B cell (primary cell): ENCODE measurements at regions of chr17 and their contacts with region 1.

Region 1: DNA sequence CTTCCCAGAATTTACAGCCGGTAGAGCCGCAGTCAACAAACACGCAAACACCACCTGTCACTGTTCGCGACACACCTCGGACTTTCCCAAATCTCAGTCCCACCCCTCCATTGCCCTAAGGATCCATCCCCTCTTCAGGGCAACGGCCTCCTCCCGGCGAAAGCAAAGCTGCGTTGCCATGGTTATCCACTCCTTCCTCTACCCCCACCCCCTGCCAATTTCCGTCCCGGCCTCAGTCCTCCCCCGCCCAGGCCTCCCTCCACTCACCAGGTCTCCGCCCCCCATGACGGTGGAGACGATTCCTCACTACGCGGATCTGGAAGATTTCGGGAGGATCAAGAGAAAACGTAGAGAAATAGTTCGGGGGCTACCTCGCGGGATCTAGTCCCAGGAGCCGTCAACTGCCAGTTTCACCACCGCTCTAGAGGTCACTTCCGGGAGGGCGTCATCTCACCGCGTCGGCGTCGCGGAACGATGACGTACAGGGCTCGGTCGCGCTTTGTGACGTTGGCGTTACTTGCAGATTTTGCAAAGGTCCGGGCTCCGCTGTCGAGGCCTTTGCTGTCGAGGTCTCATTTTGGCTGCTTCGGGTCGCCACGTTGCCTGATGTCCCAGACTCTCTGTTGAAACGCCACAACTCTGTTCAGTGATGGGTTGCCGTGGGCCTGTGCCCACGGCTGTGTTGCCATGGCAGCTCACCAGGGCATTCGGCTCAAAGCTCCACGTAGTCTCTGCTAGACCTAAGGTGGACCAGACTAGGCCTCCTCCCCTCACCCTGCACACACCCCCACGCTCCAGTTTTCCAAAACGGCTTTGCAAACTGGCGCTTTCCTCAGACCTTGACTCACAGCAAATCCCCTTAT is at the start of gene CWC25:
- DNase-seq: peak; percentile 100
- ATAC-seq: peak; percentile 83
- H3K4me3 ChIP-seq: peak within 1 kb of the TSS; percentile 77 to 93 (median 81)
- H3K4me3 Mint-ChIP-seq: peak within 1 kb of the TSS; percentile 98
- H3K27ac ChIP-seq: peak within 1 kb of the TSS; percentile 88 to 97
- H3K27ac Mint-ChIP-seq: peak within 1 kb of the TSS; percentile 100
- H3K4me1 ChIP-seq: peaks cover 14 to 19% of the 10 kb centered on the region in 2 donors
- H3K4me1 Mint-ChIP-seq: peaks cover 26% of the 10 kb centered on the region
- H3K27me3 ChIP-seq: no peaks in the 10 kb centered on the region
- H3K27me3 Mint-ChIP-seq: no peaks in the 10 kb centered on the region
- CTCF ChIP-seq: no peak
- total RNA-seq, gene CWC25: 39.3 and 43.3 TPM in 2 replicates

Region 2: GRCh38 chr17:38799378-38800236 is 25.5 kb before region 1 on chr17 and contains the start of gene PIP4K2B:
- CTCF ChIA-PET with region 1: no interaction called
- POLR2A ChIA-PET with region 1: interaction called, 3 read pairs
- intact Hi-C with region 1: loop called (anchors 1 kb)
- DNase-seq: peak; percentile 94
- ATAC-seq: peak; percentile 84
- H3K4me3 ChIP-seq: peak within 1 kb of the TSS; percentile 64 to 88 (median 75)
- H3K4me3 Mint-ChIP-seq: peak within 1 kb of the TSS; percentile 99
- H3K27ac ChIP-seq: peak within 1 kb of the TSS; percentile 72 to 79
- H3K27ac Mint-ChIP-seq: peak within 1 kb of the TSS; percentile 96
- H3K4me1 ChIP-seq: peaks cover 17 to 25% of the 10 kb centered on the region in 2 donors
- H3K4me1 Mint-ChIP-seq: peaks cover 34% of the 10 kb centered on the region
- H3K27me3 ChIP-seq: no peaks in the 10 kb centered on the region
- H3K27me3 Mint-ChIP-seq: no peaks in the 10 kb centered on the region
- CTCF ChIP-seq: no peak
- total RNA-seq, gene PIP4K2B: 42.9 and 46.8 TPM in 2 replicates

Region 3: DNA sequence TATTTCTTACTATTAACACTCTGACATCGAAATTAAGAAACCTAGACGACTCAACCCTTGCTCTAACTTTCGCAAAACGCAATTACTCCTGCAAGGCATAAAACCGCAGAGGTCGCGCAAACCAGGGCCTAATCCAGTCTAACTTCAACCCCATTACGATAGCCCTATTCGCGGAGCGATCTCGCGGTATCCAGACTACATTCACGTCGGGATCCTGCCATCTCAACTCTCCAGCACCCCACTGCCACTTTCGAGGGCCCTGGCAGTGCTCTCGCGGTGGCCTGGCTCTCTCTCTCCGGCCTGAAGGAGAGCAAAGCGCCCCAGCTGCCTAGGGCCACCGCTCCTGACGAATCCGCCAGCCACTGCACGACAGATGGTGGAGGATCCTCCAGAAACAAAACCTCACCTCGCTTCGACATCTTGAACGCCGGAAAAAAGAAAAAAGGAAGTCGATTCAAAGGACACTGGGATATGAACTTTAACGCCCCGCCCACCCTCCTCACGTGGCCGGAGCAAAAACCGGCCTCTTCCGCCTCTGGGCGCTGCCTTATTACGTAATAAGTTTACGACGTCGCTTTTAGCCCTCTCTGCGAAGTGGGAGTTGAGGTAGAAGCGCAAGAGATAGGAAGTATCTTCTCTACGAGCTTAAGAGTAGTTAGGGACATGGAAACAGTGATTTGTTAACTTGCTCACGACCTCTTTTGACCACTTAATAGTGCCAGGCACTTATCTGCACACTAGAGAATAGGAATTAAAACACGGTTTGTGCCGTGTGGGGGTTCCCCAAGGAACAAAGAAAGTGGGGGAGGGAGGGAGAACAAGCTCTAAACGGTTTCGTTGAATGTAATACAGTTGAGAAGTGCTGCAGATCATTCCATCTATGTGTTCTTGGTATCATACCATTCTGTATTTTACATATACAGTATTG is 28.4 kb after region 1 on chr17 and contains the start of gene RPL23:
- CTCF ChIA-PET with region 1: interaction called, 8 read pairs
- POLR2A ChIA-PET with region 1: interaction called, 11 read pairs
- intact Hi-C with region 1: loop called (anchors 1 kb)
- DNase-seq: peak; percentile 98
- ATAC-seq: peak; percentile 91
- H3K4me3 ChIP-seq: peak within 1 kb of the TSS; percentile 70 to 99 (median 73)
- H3K4me3 Mint-ChIP-seq: peak within 1 kb of the TSS; percentile 98
- H3K27ac ChIP-seq: peak within 1 kb of the TSS; percentile 92
- H3K27ac Mint-ChIP-seq: peak within 1 kb of the TSS; percentile 100
- H3K4me1 ChIP-seq: peaks cover 23 to 27% of the 10 kb centered on the region in 2 donors
- H3K4me1 Mint-ChIP-seq: peaks cover 41% of the 10 kb centered on the region
- H3K27me3 ChIP-seq: no peaks in the 10 kb centered on the region
- H3K27me3 Mint-ChIP-seq: no peaks in the 10 kb centered on the region
- CTCF ChIP-seq: no peak
- total RNA-seq, gene RPL23: 1,692 and 1,753 TPM in 2 replicates

Region 4: DNA sequence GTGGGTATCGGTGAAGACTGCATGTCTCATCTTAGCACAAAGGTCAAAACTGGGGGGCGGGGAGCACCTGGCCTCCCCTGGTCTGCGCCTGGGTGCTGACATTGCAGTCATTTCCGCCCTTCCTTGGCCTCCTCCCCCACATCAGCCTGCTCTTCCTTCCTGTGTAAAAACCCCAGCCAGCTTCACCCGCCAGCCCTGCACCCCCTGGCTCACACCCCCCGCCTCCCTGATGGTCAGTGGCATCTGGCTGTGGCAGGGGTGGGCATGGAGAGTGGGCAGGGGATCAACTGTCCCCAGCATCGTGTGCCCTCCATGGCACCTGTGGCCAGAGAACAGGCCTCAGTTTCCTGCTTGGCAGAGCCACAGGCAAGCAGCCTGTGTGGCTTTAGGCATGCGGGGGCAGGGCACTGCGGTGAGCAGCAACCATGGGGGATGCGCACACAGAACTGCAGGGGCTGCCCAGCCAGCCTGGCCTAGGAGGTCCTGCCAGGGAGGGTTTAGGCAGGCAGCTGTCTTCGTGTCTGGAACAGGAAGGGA is 73.8 kb after region 1 on chr17:
- CTCF ChIA-PET with region 1: no interaction called
- POLR2A ChIA-PET with region 1: interaction called, 5 read pairs
- intact Hi-C with region 1: loop called (anchors 1 kb)
- DNase-seq: peak; percentile 85
- ATAC-seq: peak; percentile 92
- H3K4me3 ChIP-seq: peak overlapping the region; percentile 23 to 55 (median 36)
- H3K4me3 Mint-ChIP-seq: peak overlapping the region; percentile 91
- H3K27ac ChIP-seq: peak overlapping the region; percentile 90 to 96
- H3K27ac Mint-ChIP-seq: peak overlapping the region; percentile 99
- H3K4me1 ChIP-seq: peaks cover 29 to 45% of the 10 kb centered on the region in 2 donors
- H3K4me1 Mint-ChIP-seq: peaks cover 30% of the 10 kb centered on the region
- H3K27me3 ChIP-seq: no peaks in the 10 kb centered on the region
- H3K27me3 Mint-ChIP-seq: no peaks in the 10 kb centered on the region
- CTCF ChIP-seq: no peak

Region 5: GRCh38 chr17:38914741-38915643 is 89.9 kb after region 1 on chr17:
- CTCF ChIA-PET with region 1: no interaction called
- POLR2A ChIA-PET with region 1: no interaction called
- intact Hi-C with region 1: no loop called
- DNase-seq: no peak
- ATAC-seq: no peak
- H3K4me3 ChIP-seq: no peak overlapping the region
- H3K4me3 Mint-ChIP-seq: no peak overlapping the region
- H3K27ac ChIP-seq: no peak overlapping the region
- H3K27ac Mint-ChIP-seq: no peak overlapping the region
- H3K4me1 ChIP-seq: no peaks in the 10 kb centered on the region
- H3K4me1 Mint-ChIP-seq: peaks cover 3% of the 10 kb centered on the region
- H3K27me3 ChIP-seq: no peaks in the 10 kb centered on the region
- H3K27me3 Mint-ChIP-seq: no peaks in the 10 kb centered on the region
- CTCF ChIP-seq: no peak

Region 6: DNA sequence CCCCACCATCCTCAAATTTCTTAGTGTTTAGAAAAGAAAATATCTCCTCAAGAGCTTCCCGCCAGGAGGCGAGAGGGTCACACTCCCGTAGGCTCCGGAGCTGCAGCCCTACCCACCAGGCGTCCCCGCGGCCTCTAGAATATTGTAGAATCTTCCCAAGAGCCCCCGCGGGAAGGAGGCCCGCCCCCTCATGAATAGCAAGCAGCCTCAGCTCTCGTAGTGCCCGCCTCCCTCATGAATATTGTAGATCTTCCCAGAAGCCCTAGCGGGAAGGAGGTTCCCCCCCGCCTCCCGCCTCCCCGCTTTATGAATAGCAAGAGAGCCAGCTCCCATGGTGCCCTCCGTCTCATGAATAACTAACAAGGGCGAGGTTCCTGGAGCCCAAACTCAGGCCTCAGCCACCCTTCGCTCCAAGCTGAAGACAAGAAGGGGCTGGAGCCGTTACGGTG is 142.2 kb after region 1 on chr17 and contains the start of gene FBXO47:
- CTCF ChIA-PET with region 1: no interaction called
- POLR2A ChIA-PET with region 1: interaction called, 3 read pairs
- intact Hi-C with region 1: loop called (anchors 1 kb)
- DNase-seq: peak; percentile 88
- ATAC-seq: peak; percentile 97
- H3K4me3 ChIP-seq: peak within 1 kb of the TSS in 4 of 5 experiments; percentile 30 to 50 (median 38)
- H3K4me3 Mint-ChIP-seq: peak within 1 kb of the TSS; percentile 82
- H3K27ac ChIP-seq: peak within 1 kb of the TSS in 1 of 2 donors; percentile 62
- H3K27ac Mint-ChIP-seq: peak within 1 kb of the TSS; percentile 88
- H3K4me1 ChIP-seq: peaks cover 0 to 13% of the 10 kb centered on the region in 2 donors
- H3K4me1 Mint-ChIP-seq: peaks cover 7% of the 10 kb centered on the region
- H3K27me3 ChIP-seq: no peaks in the 10 kb centered on the region
- H3K27me3 Mint-ChIP-seq: peaks cover 2% of the 10 kb centered on the region
- CTCF ChIP-seq: no peak
- total RNA-seq, gene FBXO47: not detected in 2 replicates